Mammary epithelial cell (primary cell): ENCODE measurements at regions of chr22 and their contacts with region 1.

Region 1: DNA sequence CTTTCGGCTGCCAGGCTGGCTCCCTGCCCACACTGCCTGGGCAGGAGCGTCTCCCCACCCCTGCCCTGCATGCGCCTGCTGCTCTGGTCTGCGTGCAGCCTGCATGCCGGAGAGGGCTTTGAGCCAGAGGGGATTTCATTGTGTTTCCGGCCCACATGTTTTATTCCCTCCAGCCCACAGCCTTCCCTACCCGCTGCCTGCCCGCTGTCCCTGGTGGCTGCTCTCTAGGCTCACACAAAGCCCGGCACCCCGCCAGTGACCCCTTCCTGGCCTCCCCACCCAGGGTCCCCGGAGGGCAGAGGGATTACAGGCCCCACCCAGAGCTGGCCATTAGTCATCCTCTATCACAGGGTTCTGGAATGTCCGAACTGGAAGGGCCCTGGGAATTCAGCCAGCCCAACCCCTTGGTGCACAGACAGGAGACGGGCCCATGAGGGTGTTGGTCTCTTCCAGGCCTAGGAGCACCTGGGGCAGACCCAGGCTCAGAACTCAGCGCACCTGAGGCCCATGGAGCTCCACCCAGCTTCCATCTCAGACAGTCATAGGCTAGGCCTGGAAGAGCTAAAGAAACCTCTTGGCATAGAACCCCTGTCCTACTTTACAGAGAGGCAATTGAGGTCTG is 55.2 kb upstream of the GCAT start:
- DNase-seq: peak; percentile 99
- H3K4me3 ChIP-seq: no peak overlapping the region
- H3K27ac ChIP-seq: peak overlapping the region; percentile 57
- H3K4me1 ChIP-seq: peaks cover 79% of the 10 kb centered on the region
- H3K27me3 ChIP-seq: no peaks in the 10 kb centered on the region
- CTCF ChIP-seq: peak in 1 of 2 donors; percentile 19

Region 2: GRCh38 chr22:37676736-37677492 is 75.7 kb before region 1 on chr22:
- CTCF ChIA-PET with region 1: no interaction called
- dilution Hi-C with region 1: no loop called
- in situ Hi-C with region 1: no loop called
- intact Hi-C with region 1: loop called (anchors 5 kb)
- DNase-seq: peak; percentile 96
- H3K4me3 ChIP-seq: peak overlapping the region; percentile 67 to 76 (median 72)
- H3K27ac ChIP-seq: peak overlapping the region; percentile 78
- H3K4me1 ChIP-seq: peaks cover 33% of the 10 kb centered on the region
- H3K27me3 ChIP-seq: no peaks in the 10 kb centered on the region
- CTCF ChIP-seq: no peak

Region 3: DNA sequence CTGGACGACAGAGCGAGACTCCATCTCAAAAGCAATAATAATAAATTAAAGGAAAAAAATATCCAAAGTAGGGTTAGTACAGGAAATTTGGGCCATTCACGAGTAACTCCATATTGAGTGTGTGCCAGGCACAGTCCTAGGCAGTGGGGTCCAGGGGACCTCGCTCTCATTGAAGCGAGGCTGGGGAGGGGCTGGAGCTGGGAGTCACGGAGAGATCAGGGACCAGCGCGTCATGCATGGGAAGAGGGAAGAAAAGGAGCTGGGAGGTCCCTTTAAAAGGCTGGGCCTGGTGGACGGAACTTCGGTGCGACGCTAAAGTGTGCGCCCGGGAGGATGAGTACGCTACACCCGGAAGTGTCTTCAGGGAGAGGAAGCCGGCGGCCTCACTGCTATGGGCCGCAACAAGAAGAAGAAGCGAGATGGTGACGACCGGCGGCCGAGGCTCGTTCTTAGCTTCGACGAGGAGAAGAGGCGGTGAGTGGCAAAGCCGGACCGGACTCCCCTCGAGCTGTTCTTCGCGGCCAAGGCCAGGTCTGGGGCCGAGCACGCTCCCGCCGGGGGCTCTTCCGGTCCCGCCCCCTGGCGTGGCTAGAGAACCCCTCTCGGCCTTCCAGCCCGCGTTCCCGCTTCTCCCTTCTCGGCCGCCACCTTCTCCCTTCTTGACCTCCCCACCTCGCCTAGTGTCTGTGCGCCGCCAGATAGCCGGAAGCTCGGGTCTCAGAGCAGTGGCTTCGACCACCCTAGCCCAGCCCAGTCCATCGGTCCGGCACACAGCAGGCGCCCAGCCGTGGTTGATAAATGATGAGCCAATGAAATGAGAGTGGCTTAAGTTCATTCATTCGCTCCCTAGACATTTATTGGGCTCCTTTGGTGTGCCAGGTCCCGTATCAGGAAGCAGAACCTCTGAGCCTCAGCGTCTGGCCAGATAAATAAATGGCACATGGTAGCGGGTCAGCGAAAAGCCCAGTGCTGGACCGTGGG is 66.3 kb before region 1 on chr22 and contains the start of gene NOL12:
- CTCF ChIA-PET with region 1: no interaction called
- dilution Hi-C with region 1: no loop called
- in situ Hi-C with region 1: loop called in 1 of 2 experiments (anchors 5 kb)
- intact Hi-C with region 1: loop called (anchors 2 kb)
- DNase-seq: peak; percentile 86
- H3K4me3 ChIP-seq: peak within 1 kb of the TSS; percentile 88 to 97 (median 91)
- H3K27ac ChIP-seq: peak within 1 kb of the TSS; percentile 77
- H3K4me1 ChIP-seq: peaks cover 44% of the 10 kb centered on the region
- H3K27me3 ChIP-seq: no peaks in the 10 kb centered on the region
- CTCF ChIP-seq: no peak
- total RNA-seq, gene NOL12: 8.0 to 32.4 TPM

Region 4: DNA sequence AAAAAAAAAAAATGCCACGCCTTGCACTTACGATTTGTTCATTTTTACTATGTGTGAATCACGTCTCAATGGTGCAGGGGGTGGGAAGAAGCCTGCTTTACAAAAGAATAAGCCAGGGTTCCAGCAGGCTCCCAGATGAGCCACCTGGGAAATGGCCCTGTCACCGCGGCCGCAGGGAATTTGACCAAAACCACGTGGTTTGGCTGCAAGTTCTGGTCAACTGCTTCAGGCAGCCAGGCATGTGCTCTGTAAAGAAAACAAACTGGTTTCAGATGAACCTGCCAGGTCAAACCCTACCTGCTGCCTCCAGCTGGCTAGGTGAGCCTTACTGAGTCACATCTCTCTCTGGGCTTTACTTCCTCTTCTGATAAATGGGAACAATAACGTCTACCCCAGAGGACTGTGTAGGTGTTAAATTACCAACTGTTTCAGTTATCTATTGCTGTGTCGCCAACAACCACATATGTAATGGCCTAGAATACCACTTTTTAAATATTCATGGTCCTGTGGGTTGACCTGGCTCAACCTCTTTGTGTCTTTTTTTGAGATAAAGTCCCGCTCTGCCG is 24.6 kb after region 1 on chr22:
- CTCF ChIA-PET with region 1: interaction called, 5 read pairs
- dilution Hi-C with region 1: no loop called
- in situ Hi-C with region 1: no loop called
- intact Hi-C with region 1: loop called (anchors 1 kb)
- DNase-seq: peak; percentile 99
- H3K4me3 ChIP-seq: no peak overlapping the region
- H3K27ac ChIP-seq: peak overlapping the region; percentile 99
- H3K4me1 ChIP-seq: peaks cover 40% of the 10 kb centered on the region
- H3K27me3 ChIP-seq: no peaks in the 10 kb centered on the region
- CTCF ChIP-seq: no peak

Region 5: GRCh38 chr22:37807410-37808293 is 55.1 kb after region 1 on chr22 and contains the start of gene GCAT:
- CTCF ChIA-PET with region 1: no interaction called
- dilution Hi-C with region 1: no loop called
- in situ Hi-C with region 1: no loop called
- intact Hi-C with region 1: loop called (anchors 2 kb)
- DNase-seq: peak; percentile 96
- H3K4me3 ChIP-seq: peak within 1 kb of the TSS; percentile 75 to 80 (median 79)
- H3K27ac ChIP-seq: peak within 1 kb of the TSS; percentile 41
- H3K4me1 ChIP-seq: peaks cover 34% of the 10 kb centered on the region
- H3K27me3 ChIP-seq: no peaks in the 10 kb centered on the region
- CTCF ChIP-seq: no peak
- total RNA-seq, gene GCAT: 17.3 to 22.4 TPM

Region 6: DNA sequence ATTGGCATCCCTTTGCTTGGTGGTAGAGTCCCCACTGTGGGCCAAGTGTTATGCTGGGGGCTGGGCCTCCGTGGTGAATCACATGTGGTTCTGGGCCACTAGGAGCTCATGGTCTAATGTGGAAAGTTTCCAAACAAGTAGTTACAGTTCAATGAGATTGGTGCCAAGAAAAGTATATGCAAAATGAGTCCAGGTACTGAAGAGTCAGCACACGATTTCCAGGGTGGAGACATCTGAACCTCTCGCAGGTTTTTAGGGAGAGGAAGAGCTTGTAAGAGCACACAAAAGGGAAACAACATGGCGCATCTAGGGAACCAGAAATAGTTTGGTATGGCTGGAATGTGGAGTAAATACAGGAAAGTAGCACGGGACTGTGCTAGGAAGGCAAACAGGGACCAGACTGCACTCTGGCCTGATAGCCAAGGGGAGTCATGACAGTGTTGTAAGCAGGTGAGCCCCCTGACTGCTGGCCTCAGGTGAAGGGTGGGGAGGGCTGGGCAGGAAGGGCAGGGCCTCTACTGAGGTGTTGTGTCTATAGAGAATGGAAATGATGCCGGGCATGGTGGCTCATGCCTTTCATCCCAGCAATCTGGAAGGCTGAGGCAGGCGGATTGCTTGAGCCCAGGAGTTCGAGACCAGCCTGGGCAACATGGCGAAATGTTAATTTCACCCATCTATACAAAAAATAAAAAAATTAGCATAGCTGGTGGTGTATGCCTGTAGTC is 213.5 kb after region 1 on chr22:
- CTCF ChIA-PET with region 1: no interaction called
- dilution Hi-C with region 1: no loop called
- in situ Hi-C with region 1: no loop called
- intact Hi-C with region 1: loop called (anchors 5 kb)
- DNase-seq: peak; percentile 17
- H3K4me3 ChIP-seq: no peak overlapping the region
- H3K27ac ChIP-seq: no peak overlapping the region
- H3K4me1 ChIP-seq: peaks cover 11% of the 10 kb centered on the region
- H3K27me3 ChIP-seq: no peaks in the 10 kb centered on the region
- CTCF ChIP-seq: no peak